ENCODE measurements at regions of chr1 and their contacts with region 1.

Region 1: GRCh38 chr1:167059045-167059808 is 30.9 kb downstream of the GPA33 start:
- DNase-seq: peak; percentile 79
- H3K4me3 Mint-ChIP-seq: no peak overlapping the region
- H3K27ac Mint-ChIP-seq: peak overlapping the region; percentile 22
- H3K4me1 Mint-ChIP-seq: peaks cover 14% of the 10 kb centered on the region
- H3K27me3 Mint-ChIP-seq: peaks cover 2% of the 10 kb centered on the region

Region 2: DNA sequence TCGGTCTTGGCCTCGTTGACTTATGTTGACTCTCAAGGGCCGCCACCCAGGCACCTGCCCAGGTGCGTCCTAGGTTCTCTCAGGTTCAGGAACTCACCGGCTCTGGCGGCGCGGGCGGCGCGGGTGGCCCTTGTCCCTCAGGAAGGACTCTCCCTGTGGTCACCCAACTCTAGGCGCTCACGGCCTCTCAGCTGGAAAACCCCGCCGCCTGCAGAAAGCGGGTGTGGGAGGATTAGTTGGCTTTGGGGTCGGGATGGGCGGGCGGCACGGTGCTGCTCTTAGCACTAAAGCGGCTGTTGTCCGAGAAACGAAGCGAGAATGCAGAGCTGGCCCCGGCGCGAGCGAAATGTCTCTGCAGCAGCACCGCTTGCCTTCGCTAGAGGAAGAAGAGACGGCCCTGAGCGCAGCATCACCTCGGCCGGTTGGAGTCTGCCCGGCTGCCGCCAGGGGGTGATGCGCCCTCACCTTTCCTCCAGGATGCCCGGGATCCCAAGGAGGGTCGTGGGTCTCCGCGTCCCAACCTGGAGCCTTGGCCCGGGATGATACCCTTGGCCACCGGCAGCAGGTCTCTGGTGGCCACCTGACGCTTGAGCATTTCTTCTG is 175.1 kb before region 1 on chr1:
- CTCF ChIA-PET with region 1: interaction called, 81 read pairs
- POLR2A ChIA-PET with region 1: no interaction called
- DNase-seq: peak; percentile 55
- H3K4me3 Mint-ChIP-seq: no peak overlapping the region
- H3K27ac Mint-ChIP-seq: no peak overlapping the region
- H3K4me1 Mint-ChIP-seq: peaks cover 25% of the 10 kb centered on the region
- H3K27me3 Mint-ChIP-seq: peaks cover 28% of the 10 kb centered on the region

Region 3: DNA sequence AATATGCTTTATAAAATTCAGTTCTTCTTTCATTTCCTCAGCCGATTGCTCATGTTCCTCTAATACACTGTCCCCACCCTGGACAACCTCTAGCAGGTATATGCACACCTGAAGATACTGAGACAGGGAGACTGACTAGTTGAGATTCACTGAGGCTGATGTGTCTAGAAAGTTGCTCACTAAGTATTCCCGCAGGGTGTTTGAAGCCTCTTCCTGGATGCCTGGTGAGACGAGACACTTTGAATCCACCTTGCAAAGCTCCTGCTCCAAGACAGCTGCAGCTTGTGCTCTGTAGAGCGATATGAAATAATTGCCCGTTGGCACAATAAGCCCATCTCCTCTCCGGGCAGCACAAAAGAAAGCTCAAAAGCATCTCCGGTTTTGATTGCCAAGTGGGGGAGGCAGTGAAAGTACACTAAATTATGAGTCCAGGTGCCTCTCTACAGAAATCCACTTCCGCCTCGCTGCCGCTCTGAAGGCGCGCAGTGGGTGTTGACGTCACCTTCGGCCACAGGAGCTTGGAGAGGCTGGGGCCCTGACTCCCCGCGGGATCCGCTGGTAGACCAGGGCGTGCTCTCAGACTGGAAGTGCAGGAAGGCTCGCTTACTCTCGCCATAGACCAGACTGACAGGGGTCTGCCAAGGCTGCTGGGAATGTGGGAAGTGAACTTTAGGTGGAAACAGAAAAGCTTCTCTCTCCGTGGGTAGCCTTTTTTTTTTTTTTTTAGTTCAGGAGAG is 15.3 kb before region 1 on chr1:
- CTCF ChIA-PET with region 1: interaction called, 20 read pairs
- POLR2A ChIA-PET with region 1: interaction called, 6 read pairs
- DNase-seq: peak; percentile 85
- H3K4me3 Mint-ChIP-seq: peak overlapping the region; percentile 65
- H3K27ac Mint-ChIP-seq: peak overlapping the region; percentile 23
- H3K4me1 Mint-ChIP-seq: peaks cover 14% of the 10 kb centered on the region
- H3K27me3 Mint-ChIP-seq: peaks cover 35% of the 10 kb centered on the region

Region 4: DNA sequence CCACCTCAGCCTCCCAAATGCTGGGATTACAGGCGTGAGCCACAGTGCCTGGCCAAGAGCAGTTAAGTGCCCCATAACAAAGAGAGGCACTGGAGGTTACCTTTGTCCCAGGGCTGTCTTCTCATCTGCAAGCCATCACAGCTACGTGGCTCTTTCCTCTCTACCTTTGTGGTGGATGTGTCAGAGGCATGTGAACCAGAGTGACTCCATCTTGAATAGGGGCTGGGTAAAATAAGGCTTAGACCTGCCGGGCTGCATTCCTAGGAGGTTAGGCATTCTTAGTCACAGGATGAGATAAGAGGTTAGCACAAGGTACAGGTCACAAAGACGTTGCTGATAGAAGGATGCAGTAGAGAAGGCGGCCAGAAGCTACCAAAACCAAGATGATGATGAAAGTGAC is 102.0 kb after region 1 on chr1:
- CTCF ChIA-PET with region 1: no interaction called
- POLR2A ChIA-PET with region 1: no interaction called
- DNase-seq: no peak
- H3K4me3 Mint-ChIP-seq: no peak overlapping the region
- H3K27ac Mint-ChIP-seq: no peak overlapping the region
- H3K4me1 Mint-ChIP-seq: no peaks in the 10 kb centered on the region
- H3K27me3 Mint-ChIP-seq: peaks cover 11% of the 10 kb centered on the region